ENCODE measurements at regions of chr21 and their contacts with region 1.

Region 1: GRCh38 chr21:25569711-25570110 is 37.6 kb downstream of the MRPL39 start:
- DNase-seq: no peak
- ATAC-seq: no peak
- H3K4me3 ChIP-seq: no peak overlapping the region
- H3K4me3 Mint-ChIP-seq: peak overlapping the region in 2 of 3 donors; percentile 0 to 42
- H3K27ac ChIP-seq: no peak overlapping the region
- H3K27ac Mint-ChIP-seq: peak overlapping the region; percentile 74 to 77
- H3K4me1 ChIP-seq: peaks cover 11 to 21% of the 10 kb centered on the region in 2 experiments
- H3K4me1 Mint-ChIP-seq: peaks cover 47 to 83% (median 80%) of the 10 kb centered on the region in 3 donors
- H3K27me3 ChIP-seq: no peaks in the 10 kb centered on the region
- H3K27me3 Mint-ChIP-seq: no peaks in the 10 kb centered on the region

Region 2: DNA sequence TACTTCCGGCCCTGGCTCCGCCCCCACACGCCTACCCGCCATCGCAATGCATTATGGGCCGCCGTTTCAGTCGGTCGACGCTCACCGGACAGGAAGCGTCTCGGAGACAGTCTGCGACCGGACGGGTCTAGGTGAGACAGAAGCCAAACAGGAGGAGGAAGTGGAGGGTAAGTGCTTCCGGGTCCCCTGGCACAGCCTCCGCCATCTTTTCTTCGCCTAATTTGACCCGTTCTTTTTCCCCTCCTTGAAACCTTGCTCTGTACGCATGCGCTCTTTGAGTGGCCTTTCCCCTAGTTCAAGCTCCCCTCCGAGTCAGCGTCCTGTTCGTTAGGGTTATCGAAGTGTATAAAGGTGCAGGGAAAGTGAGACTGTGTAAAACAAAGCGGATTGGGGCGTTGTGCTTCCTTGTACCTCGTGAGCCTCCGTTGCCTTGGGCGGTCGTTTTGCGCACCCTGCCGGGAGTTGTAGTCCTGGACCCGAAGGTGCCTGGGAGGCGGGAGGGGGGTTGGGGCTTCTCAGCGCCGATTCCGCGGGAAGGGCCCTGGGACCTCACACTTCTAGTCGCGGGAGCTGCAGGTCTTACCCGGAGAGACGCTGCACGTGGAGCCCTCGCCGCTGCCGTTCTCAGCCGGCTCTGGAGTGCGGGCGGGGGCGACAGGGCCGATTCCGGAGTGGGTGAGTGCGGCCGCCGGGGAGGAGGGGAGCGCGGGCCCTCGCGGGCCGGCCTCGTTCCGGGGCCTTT is 165.4 kb after region 1 on chr21 and contains the starts of genes ATP5PF and GABPA:
- CTCF ChIA-PET with region 1: interaction called, 3 read pairs
- POLR2A ChIA-PET with region 1: interaction called in 1 of 2 experiments, 10 read pairs
- DNase-seq: peak; percentile 93 to 99 (median 97)
- ATAC-seq: peak; percentile 87 to 91 (median 89)
- H3K4me3 ChIP-seq: peak within 1 kb of the TSS; percentile 61 to 97
- H3K4me3 Mint-ChIP-seq: peak within 1 kb of the TSS; percentile 93 to 100 (median 99)
- H3K27ac ChIP-seq: peak within 1 kb of the TSS; percentile 85
- H3K27ac Mint-ChIP-seq: peak within 1 kb of the TSS; percentile 100
- H3K4me1 ChIP-seq: peaks cover 21 to 24% of the 10 kb centered on the region in 2 experiments
- H3K4me1 Mint-ChIP-seq: peaks cover 62 to 73% (median 73%) of the 10 kb centered on the region in 3 donors
- H3K27me3 ChIP-seq: no peaks in the 10 kb centered on the region
- H3K27me3 Mint-ChIP-seq: no peaks in the 10 kb centered on the region
- total RNA-seq, gene ATP5PF: 35.1 to 52.2 (median 46.6) TPM
- total RNA-seq, gene GABPA: 23.5 to 28.3 (median 25.5) TPM

Measured in T-cell (primary cell).